Activated T-helper 1 cell treated with anti-CD3 and anti-CD28 coated beads, Interleukin-12 subunit alpha, Interleukin-12 subunit beta, Interleukin-2, Interleukin-4 antibody, amounts not matched to agents 30 ng/mL and 10 ng/mL and 1 ng/mL, durations not matched to agents 14 hours and 24 hours and 36 hours (primary cell): ENCODE measurements at regions of chr11 and their contacts with region 1.

Region 1: DNA sequence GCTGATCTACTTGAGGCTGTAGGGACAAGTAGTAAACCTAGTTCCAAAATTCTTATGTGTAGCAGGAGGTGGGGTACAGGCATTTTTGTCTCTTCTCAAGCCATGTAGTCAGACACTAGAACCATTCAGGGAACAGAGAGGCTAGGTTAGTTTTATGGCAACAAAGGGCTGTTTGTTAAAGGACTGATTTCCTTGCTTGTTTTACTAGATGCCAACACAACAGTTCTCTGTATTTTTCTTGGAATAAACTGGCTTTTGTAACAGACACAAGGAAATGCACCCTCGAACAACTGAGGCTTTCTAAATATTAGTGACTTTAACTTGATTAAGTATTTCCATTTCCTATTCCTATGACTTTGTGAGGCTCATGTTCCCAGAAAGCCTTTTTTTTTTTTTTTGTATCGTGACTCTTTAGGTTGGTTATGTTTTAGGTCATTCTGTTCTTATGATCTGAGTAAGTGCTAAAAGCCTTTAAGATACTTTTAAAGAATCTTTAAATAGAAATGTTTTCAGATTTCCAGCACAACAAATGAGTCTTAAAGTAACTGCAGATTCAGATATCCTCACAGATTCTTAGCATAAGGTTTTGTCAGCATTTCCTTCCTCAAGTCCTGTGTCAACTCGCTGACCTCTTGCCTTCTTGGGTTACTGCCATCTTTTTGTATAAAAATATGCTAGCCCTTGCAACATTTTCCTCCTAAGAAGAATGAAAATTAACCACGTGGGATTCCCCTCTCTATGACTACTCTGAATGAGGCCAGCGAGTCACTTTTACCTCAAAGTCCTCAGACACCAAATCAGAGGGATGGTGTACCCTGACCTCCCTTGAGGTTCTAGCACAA is 92.5 kb downstream of the CCDC83 start:
- DNase-seq: peak; percentile 6
- H3K4me3 Mint-ChIP-seq: peak overlapping the region; percentile 7
- H3K27ac Mint-ChIP-seq: peak overlapping the region; percentile 93
- H3K4me1 Mint-ChIP-seq: peaks cover 60% of the 10 kb centered on the region
- H3K27me3 Mint-ChIP-seq: no peaks in the 10 kb centered on the region

Region 2: DNA sequence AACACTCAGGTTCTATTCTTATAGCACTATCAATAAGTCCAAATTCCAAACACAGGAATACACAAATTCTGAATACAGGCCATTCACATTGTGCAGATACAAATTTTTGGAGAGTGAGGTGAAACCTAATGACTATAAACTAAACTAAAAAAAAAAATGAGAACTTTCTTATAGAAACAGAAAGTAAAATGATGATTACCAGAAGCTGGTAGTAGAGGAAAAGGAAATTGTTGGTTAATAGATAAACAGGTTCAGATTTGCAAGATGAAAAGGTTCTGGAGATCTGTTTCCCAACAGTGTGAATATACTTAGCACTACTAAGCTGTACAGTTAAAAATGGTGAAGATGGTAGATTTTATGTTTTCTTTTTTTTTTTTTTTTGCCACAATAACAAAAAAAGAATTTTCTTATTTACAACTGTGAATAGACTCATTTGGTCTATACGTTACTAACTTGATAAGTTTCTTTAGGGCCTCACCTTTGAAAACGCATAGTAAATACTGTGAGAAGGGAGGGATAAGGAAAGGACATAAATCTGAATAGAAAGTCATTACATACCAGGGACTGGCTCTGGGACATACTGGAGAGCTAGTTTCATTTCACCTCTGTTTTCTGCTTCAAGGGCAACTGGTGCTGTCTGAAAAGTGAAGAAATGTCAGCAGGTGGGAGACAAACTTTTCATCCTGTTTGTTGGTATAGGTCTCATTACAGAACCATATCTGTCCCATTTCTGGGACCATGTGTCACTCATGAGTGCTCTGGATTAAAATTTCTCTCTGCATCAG is 247.5 kb before region 1 on chr11:
- intact Hi-C with region 1: loop called (anchors 5 kb)
- DNase-seq: no peak
- H3K4me3 Mint-ChIP-seq: peak overlapping the region; percentile 45
- H3K27ac Mint-ChIP-seq: peak overlapping the region; percentile 78
- H3K4me1 Mint-ChIP-seq: peaks cover 49% of the 10 kb centered on the region
- H3K27me3 Mint-ChIP-seq: no peaks in the 10 kb centered on the region

Region 3: DNA sequence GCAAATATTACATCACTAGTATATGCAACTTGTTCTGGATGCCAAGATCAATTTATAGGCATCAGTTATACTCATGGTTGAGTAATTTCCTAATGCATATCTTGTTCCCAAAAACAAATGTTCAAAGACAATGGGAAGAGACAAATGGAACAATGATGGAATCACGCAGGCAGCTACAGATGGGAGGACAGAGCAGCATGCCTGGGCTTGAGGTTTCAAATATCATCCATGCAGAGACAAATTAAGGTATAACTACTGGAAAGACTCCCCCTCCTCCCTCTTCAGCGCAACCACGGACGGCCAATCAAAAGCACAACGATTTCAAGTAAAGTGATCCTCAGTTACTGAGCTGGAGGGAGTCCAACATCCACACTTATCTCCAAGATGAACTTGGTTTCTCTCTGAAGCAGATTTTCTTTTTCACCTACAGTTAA is 14.3 kb after region 1 on chr11:
- intact Hi-C with region 1: no loop called
- DNase-seq: no peak
- H3K4me3 Mint-ChIP-seq: no peak overlapping the region
- H3K27ac Mint-ChIP-seq: no peak overlapping the region
- H3K4me1 Mint-ChIP-seq: peaks cover 18% of the 10 kb centered on the region
- H3K27me3 Mint-ChIP-seq: no peaks in the 10 kb centered on the region

Region 4: GRCh38 chr11:85983762-85984161 is 36.1 kb after region 1 on chr11:
- intact Hi-C with region 1: loop called (anchors 5 kb)
- DNase-seq: no peak
- H3K4me3 Mint-ChIP-seq: no peak overlapping the region
- H3K27ac Mint-ChIP-seq: no peak overlapping the region
- H3K4me1 Mint-ChIP-seq: peaks cover 19% of the 10 kb centered on the region
- H3K27me3 Mint-ChIP-seq: no peaks in the 10 kb centered on the region

Region 5: GRCh38 chr11:86116386-86116726 is 168.7 kb after region 1 on chr11:
- intact Hi-C with region 1: loop called (anchors 5 kb)
- DNase-seq: no peak
- H3K4me3 Mint-ChIP-seq: peak overlapping the region; percentile 9
- H3K27ac Mint-ChIP-seq: peak overlapping the region; percentile 70
- H3K4me1 Mint-ChIP-seq: peaks cover 30% of the 10 kb centered on the region
- H3K27me3 Mint-ChIP-seq: no peaks in the 10 kb centered on the region

Region 6: GRCh38 chr11:86418917-86419316 is 471.3 kb after region 1 on chr11:
- intact Hi-C with region 1: loop called (anchors 2 kb)
- DNase-seq: no peak
- H3K4me3 Mint-ChIP-seq: no peak overlapping the region
- H3K27ac Mint-ChIP-seq: peak overlapping the region; percentile 14
- H3K4me1 Mint-ChIP-seq: peaks cover 19% of the 10 kb centered on the region
- H3K27me3 Mint-ChIP-seq: no peaks in the 10 kb centered on the region

Region 7: GRCh38 chr11:86592659-86593451 is 645.2 kb after region 1 on chr11:
- intact Hi-C with region 1: loop called (anchors 2 kb)
- DNase-seq: peak; percentile 81
- H3K4me3 Mint-ChIP-seq: peak overlapping the region; percentile 63
- H3K27ac Mint-ChIP-seq: peak overlapping the region; percentile 93
- H3K4me1 Mint-ChIP-seq: peaks cover 61% of the 10 kb centered on the region
- H3K27me3 Mint-ChIP-seq: no peaks in the 10 kb centered on the region